Endothelial cell of umbilical vein (primary cell): ENCODE measurements at regions of chr5 and their contacts with region 1.

Region 1: GRCh38 chr5:52743970-52744369 is 43.7 kb upstream of the ITGA1 start:
- DNase-seq: peak; percentile 88
- H3K4me3 ChIP-seq: no peak overlapping the region
- H3K27ac ChIP-seq: peak overlapping the region; percentile 70
- H3K4me1 ChIP-seq: peaks cover 28% of the 10 kb centered on the region
- H3K27me3 ChIP-seq: no peaks in the 10 kb centered on the region
- CTCF ChIP-seq: no peak
- POLR2A ChIP-seq: no peak

Region 2: GRCh38 chr5:52709171-52709925 is 34.6 kb before region 1 on chr5:
- CTCF ChIA-PET with region 1: no interaction called
- POLR2A ChIA-PET with region 1: no interaction called
- dilution Hi-C with region 1: no loop called
- intact Hi-C with region 1: loop called (anchors 2 kb)
- DNase-seq: peak; percentile 31
- H3K4me3 ChIP-seq: no peak overlapping the region
- H3K27ac ChIP-seq: no peak overlapping the region
- H3K4me1 ChIP-seq: peaks cover 25% of the 10 kb centered on the region
- H3K27me3 ChIP-seq: no peaks in the 10 kb centered on the region
- CTCF ChIP-seq: no peak
- POLR2A ChIP-seq: no peak

Region 3: GRCh38 chr5:52725065-52725746 is 18.8 kb before region 1 on chr5:
- CTCF ChIA-PET with region 1: interaction called, 4 read pairs
- POLR2A ChIA-PET with region 1: interaction called, 3 read pairs
- dilution Hi-C with region 1: no loop called
- intact Hi-C with region 1: loop called (anchors 1 kb)
- DNase-seq: no peak
- H3K4me3 ChIP-seq: no peak overlapping the region
- H3K27ac ChIP-seq: peak overlapping the region; percentile 34
- H3K4me1 ChIP-seq: peaks cover 34% of the 10 kb centered on the region
- H3K27me3 ChIP-seq: no peaks in the 10 kb centered on the region
- CTCF ChIP-seq: no peak
- POLR2A ChIP-seq: no peak

Region 4: DNA sequence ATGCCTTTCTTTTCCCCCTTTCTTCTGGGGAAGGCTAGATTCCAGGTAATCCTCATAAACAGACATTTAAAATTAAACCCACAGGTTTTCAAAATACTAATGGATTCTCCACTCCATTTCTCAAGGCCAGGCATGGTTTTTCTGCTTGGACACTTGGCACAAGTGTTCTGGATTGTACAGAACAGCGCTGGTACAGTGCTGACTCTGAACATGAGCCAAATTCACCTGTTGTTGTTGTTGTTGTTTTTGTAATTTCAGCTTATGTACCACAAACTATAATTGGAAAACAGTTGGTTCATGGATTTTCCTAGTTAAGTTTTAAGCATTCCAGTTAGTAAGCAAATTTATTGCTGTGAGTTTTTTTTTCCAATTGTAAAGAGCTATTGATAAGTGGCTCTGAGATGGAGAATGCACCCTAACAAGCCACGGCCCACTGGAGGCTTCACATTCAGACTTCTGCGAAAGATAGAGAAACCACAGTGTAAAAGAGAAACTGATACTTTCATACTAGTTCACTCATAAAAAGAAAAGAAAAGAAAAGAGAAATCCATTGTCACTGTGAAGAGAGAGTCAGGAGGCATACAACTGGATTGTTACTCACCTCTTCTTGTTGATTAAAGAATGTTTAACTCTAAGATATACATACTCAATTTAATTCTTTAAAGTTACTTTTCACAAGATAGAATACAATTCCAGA is 27.5 kb after region 1 on chr5:
- CTCF ChIA-PET with region 1: no interaction called
- POLR2A ChIA-PET with region 1: no interaction called
- dilution Hi-C with region 1: no loop called
- intact Hi-C with region 1: loop called (anchors 2 kb)
- DNase-seq: no peak
- H3K4me3 ChIP-seq: no peak overlapping the region
- H3K27ac ChIP-seq: no peak overlapping the region
- H3K4me1 ChIP-seq: no peaks in the 10 kb centered on the region
- H3K27me3 ChIP-seq: no peaks in the 10 kb centered on the region
- CTCF ChIP-seq: no peak
- POLR2A ChIP-seq: no peak

Region 5: DNA sequence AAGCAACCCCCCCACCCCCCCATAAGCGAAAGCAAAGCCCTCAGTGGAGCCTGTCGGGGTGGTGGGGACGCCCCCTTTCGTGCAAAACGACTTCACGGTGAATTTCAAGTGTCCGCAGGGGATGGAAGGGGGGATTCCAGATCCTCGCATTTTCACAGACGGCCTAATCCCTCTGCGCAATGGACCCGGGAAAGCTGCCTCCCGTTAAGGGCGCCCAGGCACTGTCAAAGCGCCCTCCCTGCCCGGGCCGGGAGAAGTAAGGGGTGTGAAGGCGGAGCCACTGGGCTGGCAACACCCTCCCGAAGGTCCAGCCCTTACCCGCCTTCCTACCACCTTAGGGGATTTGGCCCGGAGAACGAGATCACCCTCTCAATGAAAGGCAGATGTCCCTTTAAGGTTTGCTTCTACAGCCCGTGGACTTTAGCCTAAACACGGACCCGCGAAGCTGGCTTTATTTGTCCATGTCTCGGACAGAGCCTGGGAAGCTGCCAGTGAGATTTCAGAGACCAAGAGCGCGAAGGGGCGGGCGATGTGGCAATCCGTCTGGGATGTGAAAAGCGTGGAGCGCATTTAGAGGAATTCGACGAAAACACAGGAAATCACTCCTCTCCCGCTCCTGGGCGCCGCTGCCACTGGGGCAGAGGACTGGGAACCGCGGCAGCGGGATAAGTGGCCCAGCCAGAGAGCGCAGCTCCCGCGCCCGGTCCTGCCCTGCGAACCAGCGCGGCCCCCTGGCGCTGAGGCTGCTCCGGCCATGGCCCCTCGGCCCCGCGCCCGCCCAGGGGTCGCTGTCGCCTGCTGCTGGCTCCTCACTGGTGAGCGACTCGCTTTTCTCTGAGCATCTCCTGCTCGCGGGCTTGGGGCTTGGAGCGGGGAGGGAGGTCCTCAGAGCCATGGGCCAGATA is 43.9 kb after region 1 on chr5 and contains the starts of genes ITGA1 and PELO:
- CTCF ChIA-PET with region 1: no interaction called
- POLR2A ChIA-PET with region 1: no interaction called
- dilution Hi-C with region 1: no loop called
- intact Hi-C with region 1: loop called (anchors 1 kb)
- DNase-seq: peak; percentile 77
- H3K4me3 ChIP-seq: peak within 1 kb of the TSS; percentile 35 to 80 (median 62)
- H3K27ac ChIP-seq: peak within 1 kb of the TSS; percentile 19
- H3K4me1 ChIP-seq: peaks cover 11% of the 10 kb centered on the region
- H3K27me3 ChIP-seq: no peaks in the 10 kb centered on the region
- CTCF ChIP-seq: peak; percentile 16 to 51
- POLR2A ChIP-seq: no peak
- total RNA-seq, gene ITGA1: 1.9 and 3.3 TPM in 2 replicates
- total RNA-seq, gene PELO: 10.2 and 13.2 TPM in 2 replicates

Region 6: DNA sequence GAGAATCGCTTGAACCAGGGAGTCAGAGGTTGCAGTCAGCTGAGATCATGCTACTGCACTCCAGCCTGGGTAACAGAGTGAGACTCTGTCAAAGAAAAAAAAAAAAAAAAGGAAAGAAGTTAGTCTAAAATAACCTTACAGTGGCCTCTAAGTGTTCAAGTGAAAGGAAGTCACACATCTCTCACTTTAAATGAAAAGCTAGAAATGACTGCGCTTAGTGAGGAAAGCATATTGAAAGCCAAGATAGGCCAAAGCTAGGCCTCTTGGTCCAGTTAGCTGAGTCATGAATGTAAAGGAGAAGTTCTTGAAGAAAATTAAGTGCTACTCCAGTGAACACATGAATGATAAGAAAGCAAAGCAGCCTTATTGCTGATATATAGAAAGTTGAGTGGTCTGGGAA is 81.9 kb after region 1 on chr5:
- CTCF ChIA-PET with region 1: no interaction called
- POLR2A ChIA-PET with region 1: no interaction called
- dilution Hi-C with region 1: no loop called
- intact Hi-C with region 1: no loop called
- DNase-seq: no peak
- H3K4me3 ChIP-seq: no peak overlapping the region
- H3K27ac ChIP-seq: no peak overlapping the region
- H3K4me1 ChIP-seq: no peaks in the 10 kb centered on the region
- H3K27me3 ChIP-seq: no peaks in the 10 kb centered on the region
- CTCF ChIP-seq: no peak
- POLR2A ChIP-seq: no peak

Region 7: GRCh38 chr5:52870448-52870847 is 126.5 kb after region 1 on chr5:
- CTCF ChIA-PET with region 1: no interaction called
- POLR2A ChIA-PET with region 1: no interaction called
- dilution Hi-C with region 1: no loop called
- intact Hi-C with region 1: no loop called
- DNase-seq: peak; percentile 74
- H3K4me3 ChIP-seq: no peak overlapping the region
- H3K27ac ChIP-seq: no peak overlapping the region
- H3K4me1 ChIP-seq: no peaks in the 10 kb centered on the region
- H3K27me3 ChIP-seq: no peaks in the 10 kb centered on the region
- CTCF ChIP-seq: no peak
- POLR2A ChIP-seq: no peak